Activated CD4-positive, alpha-beta memory T cell treated with anti-CD3 and anti-CD28 coated beads for 36 hours (primary cell): ENCODE measurements at regions of chr6 and their contacts with region 1.

Region 1: DNA sequence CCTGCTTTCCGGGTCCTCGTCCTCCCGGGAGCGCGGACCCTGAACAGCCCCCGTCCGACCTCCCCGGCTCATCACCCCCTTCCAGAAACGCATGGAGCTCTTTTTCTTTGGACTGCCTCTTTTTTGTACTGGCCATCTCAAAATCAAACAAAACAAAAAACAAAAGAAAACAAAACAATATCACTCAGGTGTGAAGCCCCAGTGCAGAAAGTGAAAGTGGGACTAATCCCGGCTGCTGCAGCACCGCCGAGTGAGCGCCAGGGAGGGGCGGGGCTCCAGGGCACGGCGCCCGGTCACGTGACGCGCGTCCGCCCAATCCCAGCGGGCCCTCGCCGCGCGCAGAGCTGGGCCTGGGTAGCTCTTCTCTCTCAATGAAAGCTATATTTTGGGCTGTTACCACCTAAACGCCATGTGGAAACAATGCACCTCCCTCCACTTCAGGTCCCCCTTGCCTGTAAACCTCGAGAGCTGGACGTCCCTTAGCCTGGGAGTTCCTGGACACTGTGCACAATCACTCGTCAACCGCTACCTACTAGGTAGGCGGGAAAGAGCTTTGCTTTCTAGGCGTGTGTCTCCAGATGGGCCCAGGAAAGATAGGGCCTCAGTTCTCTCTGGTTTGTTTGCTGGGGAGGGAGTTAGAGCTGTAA is 93.7 kb upstream of the PRDM1 start:
- DNase-seq: peak; percentile 92
- H3K4me3 Mint-ChIP-seq: peak overlapping the region; percentile 88
- H3K27ac Mint-ChIP-seq: peak overlapping the region; percentile 81
- H3K4me1 Mint-ChIP-seq: peaks cover 32% of the 10 kb centered on the region
- H3K27me3 Mint-ChIP-seq: peaks cover 39% of the 10 kb centered on the region

Region 2: GRCh38 chr6:105452924-105453756 is 539.3 kb before region 1 on chr6:
- CTCF ChIA-PET with region 1: interaction called, 5 read pairs
- POLR2A ChIA-PET with region 1: no interaction called
- intact Hi-C with region 1: loop called (anchors 10 kb)
- DNase-seq: peak; percentile 47
- H3K4me3 Mint-ChIP-seq: peak overlapping the region; percentile 20
- H3K27ac Mint-ChIP-seq: peak overlapping the region; percentile 52
- H3K4me1 Mint-ChIP-seq: peaks cover 22% of the 10 kb centered on the region
- H3K27me3 Mint-ChIP-seq: peaks cover 15% of the 10 kb centered on the region

Region 3: DNA sequence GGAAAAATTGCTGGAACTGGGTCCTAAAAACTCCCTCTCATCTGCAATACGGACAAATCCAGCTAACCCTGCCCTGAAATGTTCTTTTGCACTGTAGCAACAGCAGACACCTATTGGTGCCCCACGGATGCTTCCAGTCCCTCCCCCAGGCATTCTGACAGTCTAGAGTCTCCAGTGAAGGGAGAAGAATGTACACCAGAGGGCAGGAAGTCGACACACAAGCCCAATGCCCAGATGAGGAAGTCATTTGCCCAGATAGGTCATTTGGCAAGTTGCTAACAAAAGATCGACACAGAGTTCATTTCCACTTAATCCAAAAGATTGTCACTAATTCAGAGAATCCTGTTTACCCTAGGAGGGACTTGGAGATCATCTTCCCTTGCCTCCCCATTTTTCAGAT is 199.3 kb before region 1 on chr6:
- CTCF ChIA-PET with region 1: no interaction called
- POLR2A ChIA-PET with region 1: no interaction called
- intact Hi-C with region 1: loop called (anchors 5 kb)
- DNase-seq: peak; percentile 30
- H3K4me3 Mint-ChIP-seq: no peak overlapping the region
- H3K27ac Mint-ChIP-seq: no peak overlapping the region
- H3K4me1 Mint-ChIP-seq: peaks cover 54% of the 10 kb centered on the region
- H3K27me3 Mint-ChIP-seq: peaks cover 4% of the 10 kb centered on the region

Region 4: DNA sequence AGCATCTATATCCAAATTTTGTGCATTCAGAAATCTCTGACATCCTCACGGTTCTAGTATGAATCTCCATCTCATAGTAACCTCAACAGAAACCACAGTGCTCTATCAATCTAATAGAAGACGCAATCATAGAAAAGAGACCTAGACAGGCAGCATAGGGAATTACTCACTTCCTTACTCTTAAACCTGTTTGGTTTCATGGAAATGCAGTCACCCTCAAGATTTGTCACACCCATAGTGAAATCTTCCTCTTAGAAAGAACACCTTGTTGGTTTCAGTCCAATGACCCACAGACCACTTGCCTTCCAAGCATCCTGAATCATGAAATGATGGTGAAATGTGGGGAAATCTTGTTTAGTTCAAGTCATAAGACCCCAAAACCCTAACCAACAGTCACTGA is 72.4 kb before region 1 on chr6:
- CTCF ChIA-PET with region 1: no interaction called
- POLR2A ChIA-PET with region 1: no interaction called
- intact Hi-C with region 1: loop called (anchors 1 kb)
- DNase-seq: peak; percentile 50
- H3K4me3 Mint-ChIP-seq: no peak overlapping the region
- H3K27ac Mint-ChIP-seq: peak overlapping the region; percentile 74
- H3K4me1 Mint-ChIP-seq: peaks cover 13% of the 10 kb centered on the region
- H3K27me3 Mint-ChIP-seq: peaks cover 7% of the 10 kb centered on the region

Region 5: DNA sequence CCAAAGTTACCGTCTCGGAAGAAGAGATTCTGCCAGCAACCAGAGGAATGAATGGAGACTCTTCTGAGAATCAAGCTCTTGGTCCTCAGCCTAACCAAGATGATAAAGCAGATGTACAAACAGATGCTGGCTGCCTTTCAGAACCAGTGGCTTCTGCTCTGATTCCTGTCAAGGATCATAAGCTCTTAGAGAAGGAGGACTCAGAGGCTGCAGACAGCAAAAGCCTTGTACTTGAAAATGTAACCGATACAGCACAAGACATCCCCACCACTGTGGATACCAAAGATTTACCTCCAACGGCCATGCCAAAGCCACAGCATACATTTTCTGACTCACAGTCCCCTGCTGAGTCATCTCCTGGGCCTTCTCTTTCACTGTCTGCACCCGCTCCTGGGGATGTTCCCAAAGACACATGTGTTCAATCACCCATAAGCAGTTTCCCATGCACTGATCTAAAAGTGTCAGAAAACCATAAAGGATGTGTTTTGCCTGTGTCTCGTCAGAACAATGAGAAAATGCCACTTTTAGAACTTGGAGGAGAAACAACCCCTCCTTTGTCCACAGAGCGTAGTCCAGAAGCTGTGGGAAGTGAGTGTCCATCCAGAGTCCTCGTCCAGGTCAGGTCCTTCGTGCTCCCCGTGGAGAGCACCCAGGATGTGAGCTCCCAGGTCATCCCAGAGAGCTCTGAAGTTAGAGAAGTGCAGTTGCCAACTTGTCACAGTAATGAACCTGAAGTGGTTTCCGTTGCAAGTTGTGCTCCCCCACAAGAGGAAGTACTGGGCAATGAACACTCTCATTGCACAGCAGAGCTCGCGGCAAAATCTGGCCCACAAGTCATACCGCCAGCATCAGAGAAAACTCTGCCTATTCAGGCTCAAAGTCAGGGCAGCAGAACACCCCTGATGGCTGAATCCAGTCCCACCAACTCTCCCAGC is 527.3 kb after region 1 on chr6:
- CTCF ChIA-PET with region 1: no interaction called
- POLR2A ChIA-PET with region 1: no interaction called
- intact Hi-C with region 1: loop called (anchors 5 kb)
- DNase-seq: peak; percentile 92
- H3K4me3 Mint-ChIP-seq: peak overlapping the region; percentile 76
- H3K27ac Mint-ChIP-seq: peak overlapping the region; percentile 99
- H3K4me1 Mint-ChIP-seq: peaks cover 67% of the 10 kb centered on the region
- H3K27me3 Mint-ChIP-seq: no peaks in the 10 kb centered on the region